Activated CD4-positive, alpha-beta T cell treated with anti-CD3 and anti-CD28 coated beads for 36 hours (primary cell): ENCODE measurements at regions of chr11 and their contacts with region 1.

Region 1: GRCh38 chr11:9003573-9004309 is at the start of gene NRIP3:
- DNase-seq: peak; percentile 82
- ATAC-seq: peak; percentile 41
- H3K4me3 Mint-ChIP-seq: peak within 1 kb of the TSS; percentile 65
- H3K27ac Mint-ChIP-seq: peak within 1 kb of the TSS; percentile 38
- H3K4me1 Mint-ChIP-seq: peaks cover 27% of the 10 kb centered on the region
- H3K27me3 Mint-ChIP-seq: peaks cover 34% of the 10 kb centered on the region
- total RNA-seq, gene NRIP3: 2.1 to 2.2 TPM

Region 2: DNA sequence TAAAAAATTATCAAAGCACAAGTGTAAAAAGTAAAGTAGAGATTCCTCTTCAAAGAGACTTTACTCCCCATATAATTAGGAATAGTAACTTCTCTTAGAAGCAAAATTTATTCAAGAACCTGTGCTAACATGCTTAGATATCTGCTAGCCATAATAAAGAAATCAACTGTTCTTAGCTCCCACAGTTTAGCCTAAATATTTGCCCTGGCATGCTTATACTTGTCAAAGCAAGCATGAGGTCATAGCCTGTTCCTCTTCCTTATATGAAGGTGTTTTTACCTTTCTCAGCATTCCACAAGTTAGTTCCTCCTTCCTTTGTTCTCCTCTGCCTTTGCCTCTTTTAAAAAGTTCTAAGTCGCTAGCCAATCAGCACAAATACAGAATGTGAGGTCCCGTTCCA is 865.2 kb before region 1 on chr11:
- CTCF ChIA-PET with region 1: no interaction called
- POLR2A ChIA-PET with region 1: no interaction called
- intact Hi-C with region 1: no loop called
- DNase-seq: no peak
- ATAC-seq: no peak
- H3K4me3 Mint-ChIP-seq: no peak overlapping the region
- H3K27ac Mint-ChIP-seq: no peak overlapping the region
- H3K4me1 Mint-ChIP-seq: no peaks in the 10 kb centered on the region
- H3K27me3 Mint-ChIP-seq: no peaks in the 10 kb centered on the region

Region 3: DNA sequence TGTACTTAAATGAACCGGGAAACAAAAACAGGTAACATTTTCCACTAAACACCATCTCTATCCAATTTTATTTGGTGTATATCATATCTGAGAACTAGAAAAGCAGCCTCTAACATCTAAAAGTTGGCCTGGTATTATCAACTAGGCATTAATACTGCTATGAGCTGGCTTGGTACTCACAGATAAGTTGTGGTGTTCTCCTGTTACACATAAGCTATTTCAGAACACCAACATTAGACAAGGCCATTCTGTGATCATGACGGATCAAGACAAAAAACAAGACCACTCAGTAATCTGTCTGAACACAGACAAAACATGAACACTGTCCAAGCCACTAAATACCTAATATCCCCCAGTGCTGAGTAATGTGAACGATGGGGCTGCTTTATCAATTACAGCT is 846.9 kb before region 1 on chr11:
- CTCF ChIA-PET with region 1: no interaction called
- POLR2A ChIA-PET with region 1: no interaction called
- intact Hi-C with region 1: no loop called
- DNase-seq: no peak
- ATAC-seq: no peak
- H3K4me3 Mint-ChIP-seq: no peak overlapping the region
- H3K27ac Mint-ChIP-seq: no peak overlapping the region
- H3K4me1 Mint-ChIP-seq: peaks cover 9% of the 10 kb centered on the region
- H3K27me3 Mint-ChIP-seq: no peaks in the 10 kb centered on the region

Region 4: GRCh38 chr11:8911029-8911826 is 92.5 kb before region 1 on chr11 and contains the start of gene AKIP1:
- CTCF ChIA-PET with region 1: interaction called, 3 read pairs
- POLR2A ChIA-PET with region 1: no interaction called
- intact Hi-C with region 1: loop called in 1 of 2 experiments (anchors 1 kb)
- DNase-seq: peak; percentile 94
- ATAC-seq: peak; percentile 76
- H3K4me3 Mint-ChIP-seq: peak within 1 kb of the TSS; percentile 86
- H3K27ac Mint-ChIP-seq: peak within 1 kb of the TSS; percentile 89
- H3K4me1 Mint-ChIP-seq: peaks cover 45% of the 10 kb centered on the region
- H3K27me3 Mint-ChIP-seq: peaks cover 6% of the 10 kb centered on the region
- total RNA-seq, gene AKIP1: 29.8 to 32.2 TPM

Region 5: GRCh38 chr11:9060700-9061111 is 57.0 kb after region 1 on chr11:
- CTCF ChIA-PET with region 1: interaction called, 3 read pairs
- POLR2A ChIA-PET with region 1: no interaction called
- intact Hi-C with region 1: loop called (anchors 1 to 2 kb)
- DNase-seq: peak; percentile 88
- ATAC-seq: peak; percentile 100
- H3K4me3 Mint-ChIP-seq: no peak overlapping the region
- H3K27ac Mint-ChIP-seq: peak overlapping the region; percentile 29
- H3K4me1 Mint-ChIP-seq: peaks cover 13% of the 10 kb centered on the region
- H3K27me3 Mint-ChIP-seq: peaks cover 25% of the 10 kb centered on the region

Region 6: GRCh38 chr11:9180784-9181183 is 177.0 kb after region 1 on chr11:
- CTCF ChIA-PET with region 1: no interaction called
- POLR2A ChIA-PET with region 1: no interaction called
- intact Hi-C with region 1: no loop called
- DNase-seq: no peak
- ATAC-seq: no peak
- H3K4me3 Mint-ChIP-seq: no peak overlapping the region
- H3K27ac Mint-ChIP-seq: no peak overlapping the region
- H3K4me1 Mint-ChIP-seq: peaks cover 11% of the 10 kb centered on the region
- H3K27me3 Mint-ChIP-seq: no peaks in the 10 kb centered on the region

Region 7: DNA sequence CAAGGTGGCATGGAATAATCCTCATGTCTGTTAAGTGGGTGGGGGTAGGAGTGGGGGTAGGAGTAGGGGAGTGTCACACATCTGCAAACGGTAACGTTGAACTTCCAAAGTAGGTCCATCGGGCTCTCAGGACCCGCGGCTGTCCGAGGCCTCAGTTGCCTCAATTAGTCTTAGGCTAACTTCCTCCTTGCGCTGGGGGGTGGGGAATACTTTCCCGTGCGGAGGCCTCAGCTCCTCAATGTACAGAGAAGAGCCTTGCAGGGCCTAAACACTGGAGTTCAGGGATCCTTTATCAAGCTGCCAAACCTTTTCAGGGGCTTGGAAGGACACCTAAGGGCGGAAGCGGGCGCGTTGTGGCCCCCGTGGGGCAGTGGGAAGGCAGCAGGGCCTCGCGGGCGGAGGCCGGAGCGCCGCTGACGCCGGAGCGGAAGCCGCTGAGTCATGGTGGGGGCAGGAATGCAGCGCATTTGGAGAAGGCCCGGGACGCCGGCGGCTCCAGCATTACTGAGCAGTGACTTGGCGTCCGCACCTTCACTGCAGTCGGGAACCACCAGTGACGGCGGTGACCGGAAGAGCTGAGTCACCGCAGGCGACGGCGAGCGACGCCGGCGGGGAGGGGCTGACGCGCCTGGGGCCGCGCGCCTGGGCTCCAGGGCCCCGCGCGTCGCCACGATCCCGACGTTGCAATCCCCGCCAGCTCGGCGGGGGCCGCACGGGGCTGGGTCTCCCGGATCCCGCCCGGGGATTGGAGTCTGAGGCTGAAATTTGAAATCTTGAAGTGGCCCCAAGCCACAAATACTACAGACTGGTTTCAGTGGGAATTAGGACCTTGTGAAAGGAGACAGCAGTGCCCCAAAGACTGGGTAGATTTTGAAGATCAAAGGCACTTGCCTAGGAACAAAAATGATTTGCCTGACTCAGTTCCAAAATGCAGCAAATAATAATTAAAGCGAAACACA is 360.5 kb after region 1 on chr11:
- CTCF ChIA-PET with region 1: no interaction called
- POLR2A ChIA-PET with region 1: no interaction called
- intact Hi-C with region 1: loop called in 1 of 2 experiments (anchors 5 kb)
- DNase-seq: peak; percentile 92
- ATAC-seq: peak; percentile 88
- H3K4me3 Mint-ChIP-seq: peak overlapping the region; percentile 62
- H3K27ac Mint-ChIP-seq: peak overlapping the region; percentile 88
- H3K4me1 Mint-ChIP-seq: peaks cover 30% of the 10 kb centered on the region
- H3K27me3 Mint-ChIP-seq: no peaks in the 10 kb centered on the region

Region 8: DNA sequence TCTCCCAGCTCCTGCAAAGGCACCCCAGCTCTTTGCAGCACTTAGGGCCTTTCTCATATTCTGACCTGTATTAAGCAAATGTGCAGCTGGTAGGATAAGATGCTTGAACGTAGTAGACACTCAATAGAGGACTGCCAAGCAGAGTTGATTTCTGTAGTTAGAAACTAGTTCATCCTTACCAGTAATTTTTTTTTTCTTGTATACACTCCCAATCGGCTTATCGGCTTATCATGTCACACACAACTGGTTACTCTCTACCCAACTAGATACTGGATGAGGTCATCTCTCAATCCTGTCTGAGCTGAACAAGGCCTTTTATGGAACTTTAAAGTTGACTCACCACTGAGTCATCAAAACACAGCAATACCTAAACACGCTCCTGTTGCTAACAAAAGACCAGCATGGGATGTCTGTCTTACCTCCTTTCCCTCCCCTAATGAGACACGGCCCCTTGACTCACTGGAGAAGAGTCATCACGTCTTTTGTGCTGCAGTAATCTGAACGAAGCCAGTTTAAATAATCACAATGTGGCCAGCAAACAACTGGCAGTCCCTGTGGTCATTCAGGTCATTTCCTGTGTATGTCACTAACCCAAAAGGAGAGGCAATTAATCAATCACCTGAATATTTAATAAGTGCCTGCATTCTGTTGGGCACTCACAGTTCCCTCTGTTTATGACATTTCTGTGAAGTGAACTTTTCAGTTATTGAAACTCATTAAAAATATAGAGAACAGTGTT is 562.2 kb after region 1 on chr11:
- CTCF ChIA-PET with region 1: no interaction called
- POLR2A ChIA-PET with region 1: no interaction called
- intact Hi-C with region 1: loop called in 1 of 2 experiments (anchors 2 kb)
- DNase-seq: peak; percentile 77
- ATAC-seq: peak; percentile 97
- H3K4me3 Mint-ChIP-seq: no peak overlapping the region
- H3K27ac Mint-ChIP-seq: peak overlapping the region; percentile 81
- H3K4me1 Mint-ChIP-seq: peaks cover 28% of the 10 kb centered on the region
- H3K27me3 Mint-ChIP-seq: peaks cover 3% of the 10 kb centered on the region